GM12878 (cell line): ENCODE measurements at regions of chr1 and their contacts with region 1.

Region 1: GRCh38 chr1:21176586-21177555 is at the start of gene EIF4G3:
- DNase-seq: peak; percentile 75
- ATAC-seq: peak; percentile 98
- H3K4me3 ChIP-seq: peak within 1 kb of the TSS; percentile 100
- H3K27ac ChIP-seq: peak within 1 kb of the TSS; percentile 81
- H3K4me1 ChIP-seq: no peaks in the 10 kb centered on the region; the same call in 1 of the 2 replicates
- H3K27me3 ChIP-seq: no peaks in the 10 kb centered on the region
- CTCF ChIP-seq: no peak
- EP300 ChIP-seq: no peak
- POLR2A ChIP-seq: peak; percentile 90
- RAD21 ChIP-seq: no peak
- polyA plus RNA-seq, gene EIF4G3: 7.4 to 10.2 TPM

Region 2: DNA sequence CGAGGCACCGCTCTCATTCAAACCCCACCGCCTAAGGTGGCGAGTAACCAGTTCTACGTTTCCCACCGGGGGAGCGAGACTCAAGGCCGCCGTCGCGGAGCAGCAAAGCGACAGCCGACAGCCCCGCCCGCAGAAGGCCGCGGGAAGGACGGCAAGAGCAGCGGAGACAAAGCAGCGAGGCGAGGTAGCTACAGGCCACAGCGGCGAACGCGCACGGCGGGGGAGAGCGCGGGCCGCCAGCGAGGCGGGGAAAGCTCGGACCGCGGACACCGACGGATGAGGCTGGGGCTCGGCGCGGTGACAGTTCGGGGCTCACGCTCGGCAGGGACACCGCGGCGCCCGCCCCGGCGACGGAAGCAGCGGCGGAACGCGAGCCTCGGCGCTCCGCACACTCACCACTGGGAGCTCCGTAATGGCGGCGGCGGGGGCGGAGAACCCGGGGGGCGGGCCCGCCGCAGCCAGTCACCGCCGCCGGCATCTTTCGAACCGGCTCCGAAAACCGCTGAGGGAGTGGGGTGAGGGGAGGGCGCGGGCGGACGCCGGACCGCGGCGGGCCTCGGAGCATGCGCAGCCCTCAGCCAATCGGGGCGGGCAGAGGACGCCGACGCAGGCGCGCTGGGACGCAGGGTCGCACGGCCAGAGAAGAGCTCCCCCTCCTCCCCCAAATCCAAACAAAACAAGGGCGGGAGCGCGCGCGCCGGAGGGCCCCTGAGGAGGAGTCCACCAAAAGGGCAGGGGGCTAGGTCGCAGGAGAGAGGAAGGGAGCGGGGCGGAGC is 390.4 kb before region 1 on chr1:
- CTCF ChIA-PET with region 1: no interaction called
- POLR2A ChIA-PET with region 1: interaction called, 5 read pairs
- RAD21 ChIA-PET with region 1: no interaction called
- SMC1A ChIA-PET with region 1: no interaction called
- in situ Hi-C with region 1: no loop called
- intact Hi-C with region 1: loop called (anchors 10 kb)
- DNase-seq: peak; percentile 82
- ATAC-seq: peak; percentile 91
- H3K4me3 ChIP-seq: peak overlapping the region; percentile 79
- H3K27ac ChIP-seq: peak overlapping the region; percentile 90
- H3K4me1 ChIP-seq: peaks cover 9% of the 10 kb centered on the region; the same call in 1 of the 2 replicates
- H3K27me3 ChIP-seq: no peaks in the 10 kb centered on the region
- CTCF ChIP-seq: 0 out of 6 replicates have a peak, but pooled peaks of 1 of the 3 experiments have one; percentile 4
- EP300 ChIP-seq: no peak; a peak in 1 of 4 replicates
- POLR2A ChIP-seq: peak; percentile 92
- RAD21 ChIP-seq: no peak

Region 3: DNA sequence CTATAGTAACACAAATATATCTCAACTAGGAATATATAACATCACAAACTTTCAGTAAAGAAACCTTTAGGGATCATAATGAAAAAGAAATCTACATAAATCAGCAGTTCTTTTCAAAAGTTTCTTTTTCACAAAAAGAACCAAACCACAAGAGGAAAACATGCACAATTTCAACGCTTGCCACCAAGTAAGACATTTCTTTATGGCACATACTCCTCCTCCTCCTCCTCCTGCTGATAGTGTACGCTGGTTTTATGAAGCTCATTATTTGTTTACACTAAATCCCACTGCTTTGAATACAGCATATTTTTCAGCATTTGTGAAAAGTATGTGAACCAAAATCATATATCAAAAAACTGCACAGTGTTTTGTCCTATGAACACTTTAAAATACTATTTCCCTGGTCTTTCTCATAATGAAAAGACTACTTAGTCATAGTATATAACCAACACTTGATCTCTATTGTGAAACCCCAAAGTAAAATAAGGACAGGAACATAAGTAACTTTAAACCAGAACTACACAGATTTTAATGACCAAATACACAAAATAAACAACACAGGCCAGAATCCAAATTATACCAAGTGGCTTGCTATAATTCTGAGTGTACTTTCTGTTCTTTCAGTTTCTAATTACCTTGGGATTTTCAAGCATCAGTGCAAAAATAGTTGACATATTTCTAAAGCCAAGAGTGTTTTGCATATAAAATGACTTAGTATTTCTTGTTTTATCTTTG is 184.4 kb before region 1 on chr1:
- CTCF ChIA-PET with region 1: interaction called, 4 read pairs
- POLR2A ChIA-PET with region 1: no interaction called
- RAD21 ChIA-PET with region 1: interaction called, 3 read pairs
- SMC1A ChIA-PET with region 1: interaction called, 4 read pairs
- in situ Hi-C with region 1: no loop called
- intact Hi-C with region 1: loop called (anchors 10 kb)
- DNase-seq: no peak
- ATAC-seq: peak; percentile 72
- H3K4me3 ChIP-seq: 0 out of 2 replicates have a peak overlapping the region, but pooled peaks have one; percentile 2
- H3K27ac ChIP-seq: peak overlapping the region; percentile 37; the same call in 1 of the 2 replicates
- H3K4me1 ChIP-seq: peaks cover 15% of the 10 kb centered on the region
- H3K27me3 ChIP-seq: no peaks in the 10 kb centered on the region
- CTCF ChIP-seq: no peak
- EP300 ChIP-seq: no peak
- POLR2A ChIP-seq: no peak
- RAD21 ChIP-seq: no peak

Region 4: DNA sequence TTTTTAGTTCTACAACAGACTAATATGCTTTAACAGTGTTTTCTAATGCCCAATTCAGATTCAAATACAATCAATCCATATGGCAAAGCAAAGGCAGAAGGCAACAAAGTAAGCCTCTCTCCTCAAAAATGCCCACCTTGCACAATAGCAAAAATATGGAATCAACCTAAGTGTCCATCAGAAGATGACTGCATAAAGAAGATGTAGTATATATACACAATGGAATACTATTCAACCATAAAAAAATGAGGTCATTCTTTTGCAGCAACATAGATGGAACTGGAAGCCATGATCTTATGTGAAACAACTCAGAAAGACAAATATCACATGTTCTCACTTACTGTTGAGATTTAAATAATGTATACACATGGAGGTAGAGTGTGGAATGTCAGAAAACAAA is 80.9 kb before region 1 on chr1:
- CTCF ChIA-PET with region 1: no interaction called
- POLR2A ChIA-PET with region 1: no interaction called
- RAD21 ChIA-PET with region 1: no interaction called
- SMC1A ChIA-PET with region 1: no interaction called
- in situ Hi-C with region 1: no loop called
- intact Hi-C with region 1: no loop called
- DNase-seq: no peak
- ATAC-seq: no peak
- H3K4me3 ChIP-seq: no peak overlapping the region
- H3K27ac ChIP-seq: no peak overlapping the region
- H3K4me1 ChIP-seq: peaks cover 3% of the 10 kb centered on the region; the same call in 1 of the 2 replicates
- H3K27me3 ChIP-seq: no peaks in the 10 kb centered on the region
- CTCF ChIP-seq: no peak
- EP300 ChIP-seq: no peak
- POLR2A ChIP-seq: no peak
- RAD21 ChIP-seq: no peak